ENCODE measurements at regions of chr14 and their contacts with region 1.

Region 1: DNA sequence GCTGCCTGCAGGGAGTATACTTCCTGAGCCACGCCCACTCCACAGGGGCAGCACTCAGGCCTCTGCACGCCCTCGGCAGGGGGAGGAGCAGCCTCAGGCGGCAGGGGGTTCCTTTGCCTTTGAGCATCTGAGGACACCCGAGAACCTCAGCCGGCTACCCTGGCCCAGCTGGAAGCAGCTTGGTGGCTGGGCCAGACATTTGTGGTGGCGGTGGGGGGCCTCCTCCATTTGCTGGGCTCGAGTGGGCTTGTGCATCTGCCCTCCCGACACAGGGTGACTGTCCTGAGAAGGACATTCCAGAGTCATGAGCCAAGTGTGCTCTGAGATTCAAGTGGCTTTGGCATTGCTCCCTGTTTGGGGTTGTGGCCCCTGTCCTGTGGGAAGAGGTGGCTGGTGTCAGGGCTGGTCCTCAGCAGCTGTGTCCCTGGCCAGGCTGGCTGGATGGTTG is 9.0 kb upstream of the CRIP2 start:
- DNase-seq: no peak
- ATAC-seq: no peak

Region 2: DNA sequence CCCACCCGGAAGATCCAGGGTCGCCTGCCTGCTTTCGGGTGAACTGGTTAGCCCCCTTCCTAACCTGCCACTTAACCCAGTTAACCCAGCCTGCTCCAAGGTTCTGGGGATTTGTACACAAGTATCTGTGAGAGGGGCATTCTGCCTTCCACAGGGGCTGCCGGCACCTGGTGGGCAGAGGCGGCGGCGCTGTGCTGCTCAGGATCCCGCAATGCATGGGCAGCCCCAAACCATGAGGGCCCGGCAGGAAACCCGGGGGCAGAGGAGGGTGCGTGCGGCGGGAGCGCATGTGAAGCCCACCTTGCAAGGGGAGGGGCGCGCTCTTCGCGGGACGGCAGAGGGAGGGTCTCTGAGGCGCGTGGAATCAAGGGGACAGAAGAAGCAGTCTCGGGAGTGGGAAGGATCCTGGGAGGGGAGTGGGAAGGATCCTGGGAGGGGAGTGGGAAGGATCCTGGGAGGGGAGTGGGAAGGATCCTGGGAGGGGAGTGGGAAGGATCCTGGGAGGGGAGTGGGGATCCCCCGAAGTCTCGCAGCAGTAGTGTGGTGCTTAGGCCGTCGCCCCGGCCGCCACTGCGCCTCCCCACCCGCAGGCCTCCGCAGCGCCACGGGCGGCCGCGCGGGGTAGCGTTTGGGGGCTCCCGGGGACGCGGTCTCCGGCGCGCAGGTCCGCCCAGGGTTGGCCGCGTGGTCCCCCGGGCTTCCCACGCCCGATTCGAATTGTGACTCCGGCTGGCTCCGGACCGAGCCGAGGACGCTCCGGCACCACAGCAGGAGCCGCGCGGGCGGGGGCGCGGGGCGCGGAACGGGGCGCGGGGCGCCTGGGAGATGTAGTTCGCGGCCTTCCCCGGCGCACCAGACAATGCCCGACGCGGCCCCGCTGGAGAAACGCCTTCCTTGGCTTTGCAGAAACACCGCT is 50.9 kb before region 1 on chr14:
- intact Hi-C with region 1: loop called in 1 of 2 experiments (anchors 10 kb)
- DNase-seq: peak; percentile 56 to 75
- ATAC-seq: peak; percentile 58

Region 3: GRCh38 chr14:105616802-105617192 is 151.2 kb after region 1 on chr14:
- intact Hi-C with region 1: no loop called
- DNase-seq: no peak
- ATAC-seq: no peak

Region 4: GRCh38 chr14:105806566-105806965 is 341.0 kb after region 1 on chr14:
- intact Hi-C with region 1: no loop called
- DNase-seq: no peak
- ATAC-seq: no peak